Activated naive CD4-positive, alpha-beta T cell treated with anti-CD3 and anti-CD28 coated beads, Interleukin-2, amount 10 ng/mL, durations not matched to agents 7 days and 5 days (primary cell): ENCODE measurements at regions of chr12 and their contacts with region 1.

Region 1: GRCh38 chr12:54300732-54301427 is at the start of gene NFE2:
- DNase-seq: peak; percentile 52
- H3K4me3 Mint-ChIP-seq: no peak within 1 kb of the TSS
- H3K27ac Mint-ChIP-seq: no peak within 1 kb of the TSS
- H3K4me1 Mint-ChIP-seq: peaks cover 24% of the 10 kb centered on the region
- H3K27me3 Mint-ChIP-seq: peaks cover 91% of the 10 kb centered on the region

Region 2: DNA sequence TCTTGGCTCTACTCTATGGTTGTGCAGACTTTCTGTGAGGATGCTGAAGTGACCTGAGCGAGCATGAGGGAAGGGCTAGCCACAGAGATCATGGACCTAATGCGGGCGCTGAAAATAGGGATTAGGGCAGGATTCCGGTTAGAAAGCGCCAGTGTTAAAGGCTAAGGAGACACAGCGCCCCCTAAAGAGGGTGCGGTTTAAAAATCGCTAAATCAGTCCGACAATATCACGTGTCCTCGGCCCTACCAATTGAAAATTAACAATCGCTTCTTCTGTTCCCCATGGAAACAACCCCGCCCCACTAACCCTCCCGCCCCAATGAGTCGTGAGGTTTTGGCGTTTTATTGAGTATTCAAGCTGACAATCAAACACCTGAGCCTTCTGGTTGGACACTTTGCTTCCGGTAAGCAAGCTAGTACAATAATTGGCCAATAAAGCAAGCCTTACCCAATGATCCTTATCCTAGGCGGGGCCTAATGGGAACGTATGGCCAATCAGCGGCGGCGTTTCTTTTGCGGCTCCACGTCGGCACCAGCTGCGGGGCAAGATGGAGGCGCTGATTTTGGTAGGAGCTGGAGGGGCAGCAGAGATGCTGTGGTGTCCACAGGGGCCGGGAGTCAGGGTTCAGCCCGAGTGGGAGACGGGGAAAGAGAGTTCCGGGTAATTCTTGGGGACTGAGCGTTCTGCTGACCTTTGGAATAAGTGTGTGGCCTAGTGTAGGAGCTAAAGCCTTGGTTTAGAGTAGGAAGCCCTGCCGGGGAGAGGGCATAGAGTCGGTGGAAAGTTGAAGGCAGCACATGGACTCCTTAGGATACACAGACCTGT is 23.9 kb after region 1 on chr12 and contains the start of gene COPZ1:
- CTCF ChIA-PET with region 1: interaction called, 16 read pairs
- DNase-seq: peak; percentile 97
- H3K4me3 Mint-ChIP-seq: peak within 1 kb of the TSS; percentile 88
- H3K27ac Mint-ChIP-seq: peak within 1 kb of the TSS; percentile 86
- H3K4me1 Mint-ChIP-seq: peaks cover 43% of the 10 kb centered on the region
- H3K27me3 Mint-ChIP-seq: peaks cover 4% of the 10 kb centered on the region